ENCODE measurements at regions of chr13 and their contacts with region 1.

Region 1: GRCh38 chr13:40682449-40683240 is 16.2 kb upstream of the FOXO1 start:
- DNase-seq: peak; percentile 35
- ATAC-seq: peak; percentile 44; the same call in 1 of the 2 replicates
- H3K4me3 ChIP-seq: no peak overlapping the region
- H3K27ac ChIP-seq: no peak overlapping the region
- H3K4me1 ChIP-seq: no peaks in the 10 kb centered on the region
- H3K27me3 ChIP-seq: no peaks in the 10 kb centered on the region; the same call in 1 of the 2 replicates
- CTCF ChIP-seq: peak; percentile 62
- POLR2A ChIP-seq: no peak
- RAD21 ChIP-seq: peak; percentile 56

Region 2: DNA sequence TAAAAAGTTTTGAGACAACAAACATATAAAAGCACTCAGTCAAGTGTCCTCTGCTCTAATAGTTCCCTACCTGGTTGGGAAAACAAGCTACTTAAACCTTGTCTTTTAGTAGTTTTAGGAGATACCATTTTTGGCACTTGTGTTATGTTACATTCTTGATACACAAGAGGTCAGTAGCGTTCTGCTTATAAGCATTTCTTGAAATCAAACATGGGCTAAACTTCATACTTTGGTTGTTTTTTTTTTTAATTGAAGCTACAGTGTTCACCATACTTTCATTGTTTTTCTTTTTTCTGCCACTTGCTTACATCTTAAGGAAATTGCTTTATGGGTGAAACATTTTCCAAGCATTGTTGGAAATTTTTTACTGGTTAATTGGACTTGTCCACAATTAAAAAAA is 1631.5 kb before region 1 on chr13:
- CTCF ChIA-PET with region 1: no interaction called
- POLR2A ChIA-PET with region 1: no interaction called
- dilution Hi-C with region 1: no loop called
- in situ Hi-C with region 1: no loop called
- intact Hi-C with region 1: loop called (anchors 10 kb)
- DNase-seq: peak; percentile 50
- ATAC-seq: peak; percentile 75
- H3K4me3 ChIP-seq: no peak overlapping the region
- H3K27ac ChIP-seq: no peak overlapping the region
- H3K4me1 ChIP-seq: no peaks in the 10 kb centered on the region
- H3K27me3 ChIP-seq: no peaks in the 10 kb centered on the region
- CTCF ChIP-seq: peak; percentile 55
- POLR2A ChIP-seq: no peak
- RAD21 ChIP-seq: peak; percentile 60

Region 3: GRCh38 chr13:39676315-39676876 is 1006.2 kb before region 1 on chr13:
- CTCF ChIA-PET with region 1: no interaction called
- POLR2A ChIA-PET with region 1: no interaction called
- dilution Hi-C with region 1: no loop called
- in situ Hi-C with region 1: loop called (anchors 25 kb)
- intact Hi-C with region 1: no loop called
- DNase-seq: peak; percentile 39
- ATAC-seq: no peak; the same call in 1 of the 2 replicates
- H3K4me3 ChIP-seq: no peak overlapping the region
- H3K27ac ChIP-seq: no peak overlapping the region
- H3K4me1 ChIP-seq: no peaks in the 10 kb centered on the region
- H3K27me3 ChIP-seq: no peaks in the 10 kb centered on the region
- CTCF ChIP-seq: peak; percentile 47
- POLR2A ChIP-seq: no peak
- RAD21 ChIP-seq: peak; percentile 32; the same call in 1 of the 2 replicates

Region 4: GRCh38 chr13:39777527-39778061 is 905.1 kb before region 1 on chr13:
- CTCF ChIA-PET with region 1: no interaction called
- POLR2A ChIA-PET with region 1: no interaction called
- dilution Hi-C with region 1: no loop called
- in situ Hi-C with region 1: no loop called
- intact Hi-C with region 1: loop called (anchors 10 kb)
- DNase-seq: peak; percentile 90
- ATAC-seq: peak; percentile 54
- H3K4me3 ChIP-seq: no peak overlapping the region
- H3K27ac ChIP-seq: no peak overlapping the region
- H3K4me1 ChIP-seq: peaks cover 8% of the 10 kb centered on the region
- H3K27me3 ChIP-seq: no peaks in the 10 kb centered on the region
- CTCF ChIP-seq: peak; percentile 53
- POLR2A ChIP-seq: no peak
- RAD21 ChIP-seq: peak; percentile 37; the same call in 1 of the 2 replicates

Region 5: GRCh38 chr13:40069173-40070044 is 613.2 kb before region 1 on chr13:
- CTCF ChIA-PET with region 1: interaction called, 6 read pairs
- POLR2A ChIA-PET with region 1: no interaction called
- dilution Hi-C with region 1: no loop called
- in situ Hi-C with region 1: no loop called
- intact Hi-C with region 1: loop called (anchors 1 kb)
- DNase-seq: peak; percentile 46
- ATAC-seq: peak; percentile 85
- H3K4me3 ChIP-seq: no peak overlapping the region
- H3K27ac ChIP-seq: no peak overlapping the region
- H3K4me1 ChIP-seq: no peaks in the 10 kb centered on the region
- H3K27me3 ChIP-seq: no peaks in the 10 kb centered on the region
- CTCF ChIP-seq: peak; percentile 58
- POLR2A ChIP-seq: no peak
- RAD21 ChIP-seq: peak; percentile 58

Region 6: DNA sequence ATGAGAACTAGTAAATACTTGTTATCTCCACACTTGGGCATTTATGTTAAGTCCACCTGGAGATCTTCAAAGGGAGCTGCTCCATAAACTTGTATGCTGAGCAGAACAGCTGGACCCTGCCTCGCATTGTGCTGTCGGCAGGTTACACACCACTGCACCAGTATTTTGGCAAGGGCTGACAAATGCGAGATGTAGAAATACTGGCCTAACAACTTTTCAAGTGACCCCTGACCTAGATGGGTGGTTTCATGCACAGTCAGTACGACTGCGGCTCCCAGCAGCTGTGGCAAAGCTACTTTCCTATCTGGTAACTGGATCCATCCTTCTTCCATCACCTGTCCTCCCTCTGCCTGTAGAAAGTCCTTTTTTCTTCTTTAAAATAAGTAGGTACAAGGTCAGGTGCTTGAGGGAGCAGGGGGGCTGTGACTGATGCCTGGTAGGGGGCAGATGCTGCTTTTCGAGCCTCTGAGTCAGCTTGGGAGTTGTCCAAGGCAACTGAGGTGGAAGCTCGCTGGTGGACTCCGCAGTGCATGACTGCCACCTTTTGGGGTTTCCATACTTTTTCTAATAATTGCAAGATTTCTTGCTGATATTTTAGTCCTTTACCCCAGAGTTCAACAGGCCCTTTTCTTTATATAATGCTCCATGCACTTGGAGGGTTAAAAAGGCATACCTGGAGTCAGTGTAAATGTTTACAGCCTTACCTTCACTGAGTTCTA is 193.5 kb after region 1 on chr13:
- CTCF ChIA-PET with region 1: no interaction called
- POLR2A ChIA-PET with region 1: no interaction called
- dilution Hi-C with region 1: no loop called
- in situ Hi-C with region 1: no loop called
- intact Hi-C with region 1: no loop called
- DNase-seq: no peak
- ATAC-seq: no peak
- H3K4me3 ChIP-seq: no peak overlapping the region
- H3K27ac ChIP-seq: no peak overlapping the region
- H3K4me1 ChIP-seq: no peaks in the 10 kb centered on the region
- H3K27me3 ChIP-seq: no peaks in the 10 kb centered on the region
- CTCF ChIP-seq: no peak
- POLR2A ChIP-seq: no peak
- RAD21 ChIP-seq: no peak